Heart right ventricle (tissue), 16 donors: ENCODE measurements at regions of chr1 and their contacts with region 1.

Region 1: GRCh38 chr1:26102526-26102925 is 9.1 kb upstream of the PDIK1L start:
- DNase-seq: no peak
- ATAC-seq: no peak
- H3K4me3 ChIP-seq: no peak overlapping the region
- H3K27ac ChIP-seq: no peak overlapping the region
- H3K4me1 ChIP-seq: peaks cover 0 to 16% (median 5%) of the 10 kb centered on the region in 9 donors
- H3K27me3 ChIP-seq: no peaks in the 10 kb centered on the region
- CTCF ChIP-seq: no peak

Region 2: DNA sequence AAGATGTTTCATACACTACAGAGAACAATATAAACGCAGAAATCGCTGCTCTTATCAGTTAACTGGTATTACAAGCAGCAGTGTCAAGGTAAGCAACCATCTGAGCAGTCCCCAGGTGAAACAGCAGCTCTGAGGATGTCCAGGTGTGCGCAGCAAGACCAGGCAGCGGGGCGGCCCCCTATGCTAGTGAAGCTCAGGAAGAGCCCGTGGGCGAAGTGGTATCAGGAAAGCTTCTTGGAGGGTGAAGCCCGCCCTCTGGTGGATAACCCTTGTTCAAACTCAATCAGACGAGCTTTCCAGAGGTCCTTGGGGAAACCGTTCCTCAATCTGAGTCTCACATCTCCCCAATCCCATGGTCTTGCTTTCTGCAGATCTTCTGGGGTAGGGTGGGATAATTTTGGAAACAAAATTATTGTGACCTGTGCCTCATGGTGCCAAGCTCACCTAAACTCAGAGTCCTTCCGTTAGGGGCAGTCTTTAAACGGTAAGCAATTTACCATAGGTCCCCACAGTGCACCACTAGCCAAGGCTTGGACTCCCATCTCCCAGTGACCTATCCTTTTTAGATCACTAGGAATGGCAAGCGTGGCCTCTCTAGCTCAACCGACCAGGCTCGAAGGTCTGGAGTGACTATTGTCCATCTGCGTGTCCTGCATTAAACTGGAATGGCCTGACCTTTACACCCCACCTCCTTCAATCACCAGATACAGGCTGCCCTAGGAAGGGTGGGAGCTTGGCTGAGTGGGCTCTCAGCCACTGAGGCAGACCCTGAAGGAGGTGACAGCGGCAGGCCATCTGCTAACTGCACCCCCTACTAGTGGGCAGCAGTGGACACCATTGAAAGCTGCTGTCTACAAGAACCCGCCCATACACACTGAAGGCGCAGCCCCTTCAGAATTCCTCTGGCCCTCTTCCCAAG is 42.8 kb after region 1 on chr1:
- intact Hi-C with region 1: loop called in 9 of 10 experiments (anchors 1 to 5 kb)
- DNase-seq: peak; percentile 60 to 80
- ATAC-seq: peak; percentile 83 to 96 (median 94)
- H3K4me3 ChIP-seq: no peak overlapping the region
- H3K27ac ChIP-seq: no peak overlapping the region
- H3K4me1 ChIP-seq: peaks cover 0 to 14% (median 4%) of the 10 kb centered on the region in 9 donors
- H3K27me3 ChIP-seq: no peaks in the 10 kb centered on the region
- CTCF ChIP-seq: peak; percentile 72 to 89 (median 82)

Region 3: DNA sequence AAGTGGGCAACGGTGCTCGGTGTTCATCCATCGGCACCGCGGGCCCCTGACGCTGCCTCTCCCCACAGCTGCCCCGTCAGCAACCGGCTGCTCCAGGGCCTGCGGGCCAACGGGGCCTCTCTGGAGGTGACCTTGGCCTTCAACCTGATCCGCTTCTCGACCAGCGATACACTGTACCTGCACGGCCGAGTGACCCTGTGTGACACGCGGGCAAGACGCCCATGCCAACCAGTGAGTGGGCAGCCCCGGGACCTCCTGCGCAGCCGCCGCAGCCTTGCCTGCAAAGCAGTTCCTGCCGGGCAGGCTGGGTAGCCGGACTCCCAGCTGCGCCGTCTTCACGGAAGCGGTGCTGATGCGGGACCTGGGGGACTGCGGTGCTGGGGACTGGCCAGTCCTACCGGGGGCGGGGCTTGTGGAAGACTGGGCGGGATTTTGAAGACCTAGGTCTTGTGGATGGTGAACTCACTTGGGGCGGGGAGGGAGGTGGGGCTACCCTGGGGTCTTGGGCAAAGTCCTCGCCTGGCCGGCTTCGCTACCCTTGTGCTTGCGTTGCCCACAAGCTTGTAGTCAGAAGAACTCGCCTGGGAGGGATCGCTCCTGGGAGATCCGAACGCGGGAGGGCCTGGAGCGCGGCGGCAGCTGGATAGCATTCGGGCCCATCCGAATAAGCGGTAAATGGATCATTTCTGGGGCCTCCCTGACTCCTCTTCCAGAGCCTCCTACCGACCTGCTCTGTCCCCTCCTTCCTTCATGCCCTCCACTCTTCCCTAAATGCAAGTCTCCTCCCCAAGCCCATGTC is 122.7 kb after region 1 on chr1:
- intact Hi-C with region 1: loop called in 4 of 10 experiments (anchors 5 to 10 kb)
- DNase-seq: peak; percentile 65 to 76
- ATAC-seq: peak; percentile 85 to 94 (median 92)
- H3K4me3 ChIP-seq: peak overlapping the region; percentile 36 to 62 (median 55)
- H3K27ac ChIP-seq: peak overlapping the region in 9 of 10 donors; percentile 5 to 71 (median 56)
- H3K4me1 ChIP-seq: peaks cover 0 to 20% (median 12%) of the 10 kb centered on the region in 9 donors
- H3K27me3 ChIP-seq: peaks cover 0 to 28% (median 14%) of the 10 kb centered on the region in 7 donors
- CTCF ChIP-seq: no peak

Region 4: GRCh38 chr1:26321315-26322041 is 219.0 kb after region 1 on chr1:
- intact Hi-C with region 1: loop called in 8 of 10 experiments (anchors 2 to 10 kb)
- DNase-seq: peak; percentile 92 to 93
- ATAC-seq: peak; percentile 90 to 93 (median 92)
- H3K4me3 ChIP-seq: no peak overlapping the region
- H3K27ac ChIP-seq: peak overlapping the region in 1 of 10 donors; percentile 11
- H3K4me1 ChIP-seq: peaks cover 0 to 52% (median 21%) of the 10 kb centered on the region in 9 donors
- H3K27me3 ChIP-seq: peaks cover 0 to 5% (median 0%) of the 10 kb centered on the region in 7 donors
- CTCF ChIP-seq: peak; percentile 77 to 93 (median 92)

Region 5: DNA sequence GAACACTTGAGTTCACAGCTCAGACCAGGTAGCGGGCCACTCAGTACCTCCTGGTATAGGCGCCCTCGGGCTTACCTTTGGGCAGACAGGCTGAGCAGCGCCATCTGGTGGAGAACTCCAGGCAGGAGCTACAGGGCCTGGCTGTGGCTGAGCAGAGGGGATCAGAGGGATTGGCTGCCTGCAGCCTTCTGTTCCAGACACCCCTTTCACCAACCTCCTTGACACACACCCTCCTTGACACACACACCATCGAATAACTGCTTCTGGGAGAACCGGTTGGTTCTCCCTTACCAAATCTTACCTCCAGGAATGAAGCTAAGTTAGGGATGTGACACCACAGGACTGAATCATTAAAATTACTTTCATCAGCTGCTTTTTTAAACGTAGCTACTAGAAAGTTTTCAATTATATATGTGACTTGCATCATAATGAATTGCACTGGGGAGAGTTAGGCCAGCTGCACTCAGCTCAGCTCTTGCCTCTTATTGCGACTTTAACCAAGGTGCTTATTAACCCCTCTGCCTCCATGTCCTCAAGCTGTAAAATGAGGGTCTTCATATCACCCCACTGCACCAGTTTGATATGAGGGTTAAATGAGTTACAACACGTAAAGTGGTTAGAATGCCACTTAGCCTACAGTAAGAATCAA is 314.7 kb after region 1 on chr1:
- intact Hi-C with region 1: loop called in 2 of 10 experiments (anchors 10 kb)
- DNase-seq: peak; percentile 60 to 72
- ATAC-seq: peak in 6 of 8 donors; percentile 71 to 86 (median 77)
- H3K4me3 ChIP-seq: no peak overlapping the region
- H3K27ac ChIP-seq: no peak overlapping the region
- H3K4me1 ChIP-seq: no peaks in the 10 kb centered on the region
- H3K27me3 ChIP-seq: peaks cover 12 to 74% (median 55%) of the 10 kb centered on the region in 7 donors
- CTCF ChIP-seq: peak; percentile 58 to 94 (median 81)